ENCODE measurements at regions of chr22 and their contacts with region 1.

Region 1: GRCh38 chr22:22959147-22959827 is 71.7 kb downstream of the IGLL5 start:
- DNase-seq: peak; percentile 52
- H3K4me3 Mint-ChIP-seq: no peak overlapping the region
- H3K27ac Mint-ChIP-seq: no peak overlapping the region
- H3K4me1 Mint-ChIP-seq: peaks cover 4% of the 10 kb centered on the region
- H3K27me3 Mint-ChIP-seq: peaks cover 40% of the 10 kb centered on the region

Region 2: DNA sequence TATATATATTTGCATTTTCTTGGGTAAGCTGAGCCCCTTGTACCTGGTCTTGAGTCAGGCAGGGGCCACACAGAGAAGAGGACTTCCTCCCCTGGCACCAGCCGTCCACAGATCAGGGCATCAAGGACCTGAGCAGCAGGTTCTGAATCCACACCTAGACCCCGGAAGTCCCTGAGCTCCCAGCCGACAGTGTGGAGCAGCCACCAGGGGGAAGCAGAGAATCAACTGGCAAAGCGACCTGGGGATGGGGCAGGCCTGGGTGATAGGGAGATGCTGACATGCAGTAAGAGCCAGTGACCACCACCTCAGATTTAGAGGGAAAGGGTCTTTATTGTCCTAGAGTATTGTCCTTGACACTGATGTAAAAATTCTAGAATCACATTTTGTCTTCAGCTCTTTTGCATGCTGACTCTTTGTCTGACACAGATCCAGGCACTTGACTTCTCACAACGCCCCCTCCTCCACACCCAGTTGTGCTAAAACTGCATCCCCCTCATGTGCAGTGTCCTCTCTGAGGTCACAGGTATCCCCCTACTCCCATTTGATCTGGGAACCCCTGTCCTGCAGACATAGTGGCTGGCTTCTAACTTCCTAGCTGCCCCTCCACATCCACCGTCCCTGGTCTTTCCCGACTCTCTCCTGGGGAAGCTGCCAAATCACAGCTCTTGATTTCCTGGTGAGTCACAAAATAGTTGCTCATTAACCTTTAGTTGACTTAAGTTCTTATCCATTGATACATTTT is 205.6 kb before region 1 on chr22:
- intact Hi-C with region 1: loop called (anchors 1 kb)
- DNase-seq: peak; percentile 61
- H3K4me3 Mint-ChIP-seq: no peak overlapping the region
- H3K27ac Mint-ChIP-seq: no peak overlapping the region
- H3K4me1 Mint-ChIP-seq: peaks cover 5% of the 10 kb centered on the region
- H3K27me3 Mint-ChIP-seq: no peaks in the 10 kb centered on the region

Region 3: DNA sequence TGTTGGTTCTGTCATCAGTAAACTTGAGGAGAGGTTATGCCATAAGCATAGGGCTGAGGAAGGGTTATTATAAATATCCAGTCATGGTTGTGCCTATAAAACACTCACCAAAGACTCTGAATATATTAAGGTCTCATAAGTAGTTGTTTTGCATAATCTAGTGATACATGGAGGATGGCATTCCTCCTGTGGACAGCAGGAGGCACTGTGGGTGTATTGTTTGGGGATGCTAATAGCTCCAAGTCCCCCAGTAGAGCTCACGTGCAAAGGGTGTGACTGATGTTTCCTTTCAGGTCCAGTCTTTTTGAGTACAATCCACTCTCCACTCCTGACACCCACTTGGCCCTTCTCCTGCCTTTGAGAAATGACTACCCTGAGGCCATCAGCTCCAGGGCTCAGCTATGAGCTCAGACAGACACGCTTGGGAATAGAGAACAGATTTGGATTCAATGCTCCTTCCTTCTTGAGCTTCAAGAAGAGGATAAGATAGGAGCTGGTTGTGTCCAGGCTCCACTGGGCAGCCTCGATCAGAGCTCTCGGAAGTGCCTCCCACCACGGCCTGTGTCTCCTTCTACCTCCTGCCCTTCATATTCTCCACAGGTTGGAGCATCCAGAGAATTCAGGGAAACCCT is 156.8 kb before region 1 on chr22:
- intact Hi-C with region 1: loop called (anchors 1 kb)
- DNase-seq: peak; percentile 22
- H3K4me3 Mint-ChIP-seq: no peak overlapping the region
- H3K27ac Mint-ChIP-seq: no peak overlapping the region
- H3K4me1 Mint-ChIP-seq: no peaks in the 10 kb centered on the region
- H3K27me3 Mint-ChIP-seq: peaks cover 32% of the 10 kb centered on the region

Region 4: GRCh38 chr22:22884888-22885840 is 74.1 kb before region 1 on chr22:
- intact Hi-C with region 1: loop called (anchors 5 kb)
- DNase-seq: peak; percentile 25
- H3K4me3 Mint-ChIP-seq: no peak overlapping the region
- H3K27ac Mint-ChIP-seq: peak overlapping the region; percentile 57
- H3K4me1 Mint-ChIP-seq: peaks cover 12% of the 10 kb centered on the region
- H3K27me3 Mint-ChIP-seq: peaks cover 27% of the 10 kb centered on the region

Region 5: GRCh38 chr22:22974156-22974555 is 14.9 kb after region 1 on chr22:
- intact Hi-C with region 1: no loop called
- DNase-seq: no peak
- H3K4me3 Mint-ChIP-seq: no peak overlapping the region
- H3K27ac Mint-ChIP-seq: no peak overlapping the region
- H3K4me1 Mint-ChIP-seq: no peaks in the 10 kb centered on the region
- H3K27me3 Mint-ChIP-seq: peaks cover 31% of the 10 kb centered on the region

Region 6: GRCh38 chr22:23281406-23282088 is 322.3 kb after region 1 on chr22:
- intact Hi-C with region 1: loop called (anchors 5 kb)
- DNase-seq: peak; percentile 68
- H3K4me3 Mint-ChIP-seq: no peak overlapping the region
- H3K27ac Mint-ChIP-seq: no peak overlapping the region
- H3K4me1 Mint-ChIP-seq: peaks cover 31% of the 10 kb centered on the region
- H3K27me3 Mint-ChIP-seq: no peaks in the 10 kb centered on the region

Measured in activated T-helper 1 cell treated with anti-CD3 and anti-CD28 coated beads, Interleukin-12 subunit alpha, Interleukin-12 subunit beta, Interleukin-2, Interleukin-4 antibody, amounts not matched to agents 30 ng/mL and 10 ng/mL and 1 ng/mL, durations not matched to agents 14 hours and 24 hours and 36 hours (primary cell).